ENCODE measurements at regions of chr20 and their contacts with region 1.

Region 1: DNA sequence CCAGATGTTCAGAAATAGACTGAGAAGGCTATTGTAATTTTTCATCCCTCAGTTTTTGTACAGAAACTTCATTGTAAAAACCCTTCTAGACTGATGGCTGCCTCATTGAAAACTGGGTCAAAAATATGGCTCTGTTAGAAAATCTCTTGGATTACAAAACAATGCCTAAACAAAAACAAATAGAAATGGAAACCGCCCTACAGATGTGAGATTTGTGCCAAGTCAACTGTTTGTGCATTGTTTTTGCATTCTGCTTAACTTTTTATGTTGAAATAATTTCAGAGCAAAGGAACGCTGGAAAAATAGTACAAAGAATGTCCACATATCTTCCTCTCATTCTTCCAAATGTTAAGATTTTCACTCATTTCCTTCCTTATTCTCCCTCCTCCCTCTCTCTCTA is 425.1 kb downstream of the FOXA2 start:
- DNase-seq: no peak
- ATAC-seq: no peak
- H3K4me3 ChIP-seq: no peak overlapping the region
- H3K27ac ChIP-seq: no peak overlapping the region
- H3K4me1 ChIP-seq: no peaks in the 10 kb centered on the region
- H3K27me3 ChIP-seq: no peaks in the 10 kb centered on the region
- CTCF ChIP-seq: no peak
- POLR2A ChIP-seq: no peak

Region 2: GRCh38 chr20:22098511-22098910 is 60.8 kb before region 1 on chr20:
- intact Hi-C with region 1: loop called in 1 of 10 experiments (anchors 10 kb)
- DNase-seq: no peak
- ATAC-seq: no peak
- H3K4me3 ChIP-seq: no peak overlapping the region
- H3K27ac ChIP-seq: no peak overlapping the region
- H3K4me1 ChIP-seq: no peaks in the 10 kb centered on the region
- H3K27me3 ChIP-seq: no peaks in the 10 kb centered on the region
- CTCF ChIP-seq: no peak
- POLR2A ChIP-seq: no peak

Measured in heart left ventricle (tissue), 16 donors.